GM12878 (cell line): ENCODE measurements at regions of chr11 and their contacts with region 1.

Region 1: DNA sequence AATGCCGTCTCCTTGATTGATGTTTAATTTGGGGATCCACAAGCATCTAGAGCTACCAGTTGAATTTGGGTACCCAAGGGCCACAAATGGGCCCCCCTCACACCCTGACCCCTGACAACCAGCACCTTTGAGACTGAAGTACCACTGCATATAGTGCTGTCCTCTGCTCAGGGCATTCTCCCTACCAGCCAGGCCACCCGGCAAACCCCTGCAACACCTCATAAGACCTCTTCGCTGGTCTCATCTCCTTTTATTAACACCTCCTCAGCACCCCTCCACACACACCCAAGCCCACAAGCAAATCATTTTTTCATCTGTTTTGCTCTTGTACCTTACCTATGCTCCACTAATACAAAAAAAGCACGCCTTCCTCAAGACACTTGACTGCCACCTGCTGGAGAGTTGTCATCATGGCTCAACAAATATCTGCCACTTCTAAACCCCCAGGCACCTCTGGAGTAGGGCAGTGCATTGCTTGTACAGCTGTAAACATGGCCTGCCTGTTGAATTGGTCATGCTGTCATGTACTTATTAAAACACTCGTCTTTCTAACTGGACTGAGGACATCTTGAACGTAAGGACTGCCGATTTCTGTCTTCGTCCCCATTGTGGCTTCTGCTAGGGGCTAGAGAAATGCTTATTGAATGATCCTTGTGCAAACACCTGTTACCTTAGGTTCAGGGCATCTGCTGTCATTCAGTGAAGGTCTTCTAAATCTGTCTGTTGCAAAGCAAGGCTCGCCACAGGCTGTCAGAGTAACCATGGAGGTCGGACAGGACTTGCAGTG is 66.5 kb downstream of the BMAL1 start:
- DNase-seq: no peak
- ATAC-seq: peak; percentile 69
- H3K4me3 ChIP-seq: no peak overlapping the region
- H3K27ac ChIP-seq: no peak overlapping the region
- H3K4me1 ChIP-seq: peaks cover 40% of the 10 kb centered on the region
- H3K27me3 ChIP-seq: no peaks in the 10 kb centered on the region
- CTCF ChIP-seq: peak; percentile 79 to 84 (median 80)
- EP300 ChIP-seq: no peak
- POLR2A ChIP-seq: no peak
- RAD21 ChIP-seq: peak; percentile 84

Region 2: GRCh38 chr11:13210424-13210823 is 133.7 kb before region 1 on chr11:
- CTCF ChIA-PET with region 1: interaction called, 57 read pairs
- POLR2A ChIA-PET with region 1: no interaction called
- RAD21 ChIA-PET with region 1: interaction called, 36 read pairs
- SMC1A ChIA-PET with region 1: interaction called, 30 read pairs
- in situ Hi-C with region 1: no loop called
- intact Hi-C with region 1: loop called (anchors 1 kb)
- DNase-seq: no peak
- ATAC-seq: peak; percentile 66
- H3K4me3 ChIP-seq: no peak overlapping the region
- H3K27ac ChIP-seq: no peak overlapping the region
- H3K4me1 ChIP-seq: peaks cover 12% of the 10 kb centered on the region
- H3K27me3 ChIP-seq: no peaks in the 10 kb centered on the region; a peak in 1 of 4 replicates
- CTCF ChIP-seq: peak; percentile 32 to 49 (median 47); a peak in 5 of 6 replicates
- EP300 ChIP-seq: no peak
- POLR2A ChIP-seq: no peak
- RAD21 ChIP-seq: peak; percentile 74

Region 3: DNA sequence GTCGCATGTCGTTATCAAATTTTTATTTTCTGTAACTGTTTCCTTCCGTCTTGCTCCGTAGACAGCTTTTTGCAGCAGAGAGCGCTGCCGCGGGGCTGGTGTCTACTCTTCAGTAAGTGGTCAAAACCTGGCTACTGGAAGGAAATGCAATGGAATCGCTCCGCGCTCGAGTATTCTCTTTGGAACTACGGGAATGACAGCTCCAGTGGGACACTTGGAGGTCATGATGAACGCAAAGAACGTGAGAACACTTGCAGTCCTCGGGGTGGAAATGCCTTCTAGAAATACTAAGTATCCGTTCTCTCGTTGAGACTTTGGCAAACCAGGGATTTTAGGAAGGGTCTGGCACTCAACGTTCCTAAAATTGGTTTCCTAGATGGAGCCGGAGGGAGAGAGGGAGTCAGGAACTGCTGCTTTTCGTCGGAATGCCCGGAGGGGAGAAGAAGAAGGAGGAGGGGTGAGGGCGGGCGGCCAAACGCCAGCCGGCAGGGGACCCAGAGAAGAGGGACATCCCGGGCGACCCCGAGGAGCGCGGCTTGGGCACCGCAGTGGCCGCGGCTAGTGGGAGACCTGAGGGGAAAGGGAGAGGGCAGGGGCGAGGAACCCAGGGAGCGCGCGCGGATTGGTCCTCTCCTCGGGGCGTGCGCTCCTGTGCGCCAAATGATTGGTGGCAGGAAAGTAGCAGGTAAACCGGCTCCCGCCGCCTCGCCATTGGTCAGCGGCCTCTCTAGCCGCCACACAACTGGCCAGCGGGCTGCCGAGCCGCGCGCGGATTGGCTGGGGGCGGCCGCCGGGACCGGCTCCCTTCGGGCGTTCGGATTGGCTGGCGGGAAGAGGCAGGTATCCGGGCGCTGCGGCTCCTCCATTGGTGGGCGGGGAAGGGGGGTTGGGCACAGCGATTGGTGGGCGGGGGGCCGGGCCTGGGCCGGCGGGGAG is 67.0 kb before region 1 on chr11:
- CTCF ChIA-PET with region 1: interaction called, 23 read pairs
- POLR2A ChIA-PET with region 1: no interaction called
- RAD21 ChIA-PET with region 1: interaction called, 52 read pairs
- SMC1A ChIA-PET with region 1: interaction called, 32 read pairs
- in situ Hi-C with region 1: no loop called
- intact Hi-C with region 1: no loop called
- DNase-seq: peak; percentile 85
- ATAC-seq: peak; percentile 89
- H3K4me3 ChIP-seq: peak overlapping the region; percentile 74
- H3K27ac ChIP-seq: no peak overlapping the region
- H3K4me1 ChIP-seq: peaks cover 2% of the 10 kb centered on the region; the same call in 1 of the 2 replicates
- H3K27me3 ChIP-seq: peaks cover 0 to 6% of the 10 kb centered on the region in 2 experiments; a peak in 1 of 4 replicates
- CTCF ChIP-seq: no peak
- EP300 ChIP-seq: no peak
- POLR2A ChIP-seq: peak; percentile 58; the same call in 1 of the 2 replicates
- RAD21 ChIP-seq: no peak